ENCODE measurements at regions of chr1 and their contacts with region 1.

Region 1: DNA sequence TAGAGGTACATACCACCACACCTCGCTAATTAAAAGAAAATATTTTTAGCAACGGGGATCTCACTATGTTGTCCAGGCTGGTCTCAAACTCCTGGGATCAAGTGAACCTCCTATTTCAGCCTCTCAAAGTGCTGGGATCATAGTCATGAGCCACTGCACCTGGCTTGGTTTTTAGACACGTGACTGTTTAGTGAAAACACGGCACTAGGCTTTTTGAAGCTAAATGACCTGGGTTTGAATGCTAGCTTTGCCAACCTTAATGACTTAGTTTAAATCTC is 2.3 kb upstream of the UQCRHL start:
- DNase-seq: no peak
- ATAC-seq: no peak
- H3K4me3 ChIP-seq: no peak overlapping the region
- H3K27ac ChIP-seq: no peak overlapping the region
- H3K4me1 ChIP-seq: no peaks in the 10 kb centered on the region
- H3K27me3 ChIP-seq: no peaks in the 10 kb centered on the region
- CTCF ChIP-seq: no peak

Region 2: GRCh38 chr1:15656464-15656863 is 153.3 kb before region 1 on chr1:
- intact Hi-C with region 1: no loop called
- DNase-seq: no peak
- ATAC-seq: no peak
- H3K4me3 ChIP-seq: no peak overlapping the region
- H3K27ac ChIP-seq: no peak overlapping the region
- H3K4me1 ChIP-seq: no peaks in the 10 kb centered on the region
- H3K27me3 ChIP-seq: no peaks in the 10 kb centered on the region
- CTCF ChIP-seq: no peak

Region 3: DNA sequence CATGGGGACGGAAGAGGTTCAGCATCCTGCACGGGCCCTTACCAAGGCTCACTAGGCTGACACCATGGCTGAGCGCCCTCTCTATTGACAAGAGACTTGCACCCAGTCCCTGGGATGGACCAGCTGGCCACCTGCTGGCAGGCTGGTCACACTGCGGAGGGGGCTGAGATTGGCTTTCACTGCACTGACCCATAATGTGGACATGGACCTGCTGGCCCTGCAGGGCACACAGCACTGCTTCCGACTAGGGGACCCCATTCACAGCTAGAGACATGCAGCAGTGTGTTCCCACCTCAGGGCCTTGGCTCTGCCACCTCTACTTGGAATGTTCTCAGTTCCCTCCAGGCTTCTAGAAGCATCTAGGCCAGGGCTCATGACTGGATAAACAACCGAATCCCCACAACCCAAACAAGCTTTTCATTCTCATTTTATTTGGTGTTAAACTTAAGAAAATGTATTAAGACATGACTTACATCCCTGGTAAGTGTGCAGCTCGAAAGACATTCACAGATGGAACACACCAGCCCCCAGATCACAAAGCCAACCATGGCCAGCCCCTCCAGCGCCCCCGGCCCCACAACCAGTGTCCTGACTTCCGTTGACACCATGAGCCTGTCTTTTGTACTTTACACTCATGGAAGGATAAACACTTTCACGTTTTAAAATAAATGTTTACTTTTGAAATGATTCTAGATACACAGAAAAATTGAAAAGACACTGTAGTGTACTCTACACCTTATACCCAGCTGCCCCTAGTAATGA is 185.0 kb after region 1 on chr1:
- intact Hi-C with region 1: loop called in 2 of 3 experiments (anchors 5 to 10 kb)
- DNase-seq: peak; percentile 51 to 79 (median 74)
- ATAC-seq: peak; percentile 84 to 95 (median 89)
- H3K4me3 ChIP-seq: no peak overlapping the region
- H3K27ac ChIP-seq: no peak overlapping the region
- H3K4me1 ChIP-seq: no peaks in the 10 kb centered on the region
- H3K27me3 ChIP-seq: no peaks in the 10 kb centered on the region
- CTCF ChIP-seq: peak; percentile 54 to 67 (median 60)

Measured in pancreas (tissue), 10 donors.